CD4-positive, alpha-beta memory T cell (primary cell): ENCODE measurements at regions of chr3 and their contacts with region 1.

Region 1: GRCh38 chr3:57692259-57693147 is at the start of gene DENND6A:
- DNase-seq: peak; percentile 87 to 96 (median 95)
- H3K4me3 ChIP-seq: peak within 1 kb of the TSS; percentile 15 to 95
- H3K4me3 Mint-ChIP-seq: peak within 1 kb of the TSS; percentile 82 to 97 (median 92)
- H3K27ac ChIP-seq: peak within 1 kb of the TSS; percentile 84
- H3K27ac Mint-ChIP-seq: peak within 1 kb of the TSS; percentile 79 to 97 (median 94)
- H3K4me1 ChIP-seq: peaks cover 49% of the 10 kb centered on the region
- H3K4me1 Mint-ChIP-seq: peaks cover 16 to 45% (median 32%) of the 10 kb centered on the region in 4 donors
- H3K27me3 ChIP-seq: no peaks in the 10 kb centered on the region
- H3K27me3 Mint-ChIP-seq: no peaks in the 10 kb centered on the region
- total RNA-seq, gene DENND6A: 40.1 to 43.7 TPM

Region 2: DNA sequence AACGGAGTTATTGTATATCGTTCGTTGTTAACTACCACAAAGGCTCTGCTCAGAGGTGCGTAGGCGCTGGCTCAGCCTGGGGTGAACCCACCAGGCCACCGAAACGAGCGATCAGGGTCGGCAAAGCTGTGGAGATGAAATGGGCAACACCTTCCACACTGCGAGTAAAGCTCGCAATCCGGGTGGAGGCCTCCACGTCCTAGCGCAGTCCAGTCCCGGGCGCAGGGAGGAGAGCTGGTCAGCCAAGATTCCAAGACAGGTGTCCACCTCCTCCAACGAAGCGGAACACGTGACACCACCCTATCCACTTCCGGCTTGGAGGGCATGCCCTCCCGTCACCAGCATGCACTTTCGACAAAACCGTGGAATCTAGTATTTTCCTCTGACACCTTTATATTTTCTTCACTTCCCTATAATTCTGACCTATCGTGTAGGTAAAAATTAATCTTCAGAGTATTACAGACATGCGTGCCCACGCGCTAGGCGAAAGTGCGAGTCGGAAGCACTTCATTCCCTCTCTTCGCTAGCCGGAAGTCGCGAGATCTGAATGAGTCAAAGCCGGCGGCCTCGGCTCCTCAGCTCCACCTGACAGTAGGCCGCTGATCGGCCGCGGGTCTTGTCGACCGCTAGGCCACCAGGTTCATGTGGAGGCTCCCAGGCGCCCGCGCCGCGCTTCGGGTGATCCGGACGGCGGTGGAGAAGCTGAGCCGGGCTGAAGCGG is 136.6 kb before region 1 on chr3 and contains the start of gene PDE12:
- CTCF ChIA-PET with region 1: no interaction called
- POLR2A ChIA-PET with region 1: interaction called, 27 read pairs
- intact Hi-C with region 1: loop called (anchors 2 kb)
- DNase-seq: peak; percentile 82 to 87 (median 83)
- H3K4me3 ChIP-seq: peak within 1 kb of the TSS; percentile 85 to 89
- H3K4me3 Mint-ChIP-seq: peak within 1 kb of the TSS; percentile 92 to 100 (median 96)
- H3K27ac ChIP-seq: peak within 1 kb of the TSS; percentile 89
- H3K27ac Mint-ChIP-seq: peak within 1 kb of the TSS; percentile 97 to 100 (median 99)
- H3K4me1 ChIP-seq: peaks cover 43% of the 10 kb centered on the region
- H3K4me1 Mint-ChIP-seq: peaks cover 24 to 57% (median 36%) of the 10 kb centered on the region in 4 donors
- H3K27me3 ChIP-seq: no peaks in the 10 kb centered on the region
- H3K27me3 Mint-ChIP-seq: no peaks in the 10 kb centered on the region
- total RNA-seq, gene PDE12: 23.8 to 24.9 TPM

Region 3: DNA sequence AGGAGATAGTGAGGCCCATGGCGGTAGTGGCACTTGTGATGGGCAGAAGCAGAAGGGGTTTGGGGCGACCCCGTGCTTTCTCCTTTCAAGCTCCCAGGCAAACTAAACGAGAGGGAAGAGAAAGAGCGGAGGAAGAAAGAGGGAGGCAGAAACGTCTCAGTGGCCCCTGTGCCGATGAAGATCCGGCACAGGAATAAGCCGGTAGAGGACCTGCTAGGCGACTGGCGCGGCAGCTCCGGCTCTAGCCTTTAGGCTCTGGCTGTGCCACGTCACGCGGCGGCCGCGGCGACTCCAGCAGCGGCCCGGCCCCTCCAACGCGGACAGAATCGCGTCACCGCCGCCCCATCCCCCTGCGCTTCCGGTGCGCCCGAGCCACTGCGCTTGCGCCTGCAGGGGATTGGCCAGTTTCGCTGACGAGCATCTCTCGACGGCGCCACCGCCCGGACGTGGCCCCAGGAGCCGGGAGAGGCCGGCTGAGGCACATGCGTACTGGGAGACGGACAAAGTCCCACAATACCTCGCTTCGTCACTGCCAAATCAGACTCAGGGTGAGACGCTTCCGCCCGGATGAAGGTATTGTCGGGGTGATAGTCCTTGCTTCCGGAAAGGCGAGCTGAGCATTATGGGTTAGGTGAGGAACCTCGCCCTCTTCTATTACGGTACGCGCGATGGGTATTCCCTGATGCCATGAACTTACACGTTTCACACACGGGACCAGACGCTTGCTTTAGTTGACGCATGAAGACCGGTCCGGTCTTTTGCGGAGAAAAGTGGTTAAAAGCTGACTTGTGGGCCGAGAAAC is 95.2 kb before region 1 on chr3 and contains the start of gene ARF4:
- CTCF ChIA-PET with region 1: no interaction called
- POLR2A ChIA-PET with region 1: interaction called, 40 read pairs
- intact Hi-C with region 1: loop called (anchors 1 kb)
- DNase-seq: peak; percentile 100
- H3K4me3 ChIP-seq: peak within 1 kb of the TSS; percentile 72 to 95
- H3K4me3 Mint-ChIP-seq: peak within 1 kb of the TSS; percentile 85 to 99 (median 99)
- H3K27ac ChIP-seq: peak within 1 kb of the TSS; percentile 100
- H3K27ac Mint-ChIP-seq: peak within 1 kb of the TSS; percentile 99 to 100 (median 100)
- H3K4me1 ChIP-seq: peaks cover 62% of the 10 kb centered on the region
- H3K4me1 Mint-ChIP-seq: peaks cover 34 to 72% (median 48%) of the 10 kb centered on the region in 4 donors
- H3K27me3 ChIP-seq: no peaks in the 10 kb centered on the region
- H3K27me3 Mint-ChIP-seq: no peaks in the 10 kb centered on the region
- total RNA-seq, gene ARF4: 55.8 to 58.5 TPM

Region 4: DNA sequence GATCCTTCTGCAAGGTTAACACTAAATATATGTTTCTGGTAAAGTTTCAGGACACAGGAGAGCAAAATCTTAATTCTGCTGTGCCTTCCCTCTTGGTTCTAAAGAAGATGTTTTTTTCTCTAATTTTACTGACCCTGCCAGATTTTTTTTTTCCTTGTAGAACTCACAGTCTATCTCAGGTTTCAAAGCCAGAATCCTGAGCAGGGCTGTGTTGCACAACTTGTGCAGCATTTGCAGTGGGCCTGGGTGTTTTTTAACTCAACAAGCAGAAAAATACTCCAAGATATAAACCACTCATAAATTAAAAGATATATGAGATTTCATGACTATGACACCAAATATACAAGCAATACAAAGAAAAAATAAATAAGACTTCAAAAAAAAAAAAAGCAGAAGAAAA is 55.1 kb before region 1 on chr3:
- CTCF ChIA-PET with region 1: no interaction called
- POLR2A ChIA-PET with region 1: no interaction called
- intact Hi-C with region 1: loop called (anchors 10 kb)
- DNase-seq: no peak
- H3K4me3 ChIP-seq: no peak overlapping the region
- H3K4me3 Mint-ChIP-seq: no peak overlapping the region
- H3K27ac ChIP-seq: no peak overlapping the region
- H3K27ac Mint-ChIP-seq: no peak overlapping the region
- H3K4me1 ChIP-seq: no peaks in the 10 kb centered on the region
- H3K4me1 Mint-ChIP-seq: peaks cover 0 to 8% (median under 1%) of the 10 kb centered on the region in 4 donors
- H3K27me3 ChIP-seq: no peaks in the 10 kb centered on the region
- H3K27me3 Mint-ChIP-seq: no peaks in the 10 kb centered on the region

Region 5: DNA sequence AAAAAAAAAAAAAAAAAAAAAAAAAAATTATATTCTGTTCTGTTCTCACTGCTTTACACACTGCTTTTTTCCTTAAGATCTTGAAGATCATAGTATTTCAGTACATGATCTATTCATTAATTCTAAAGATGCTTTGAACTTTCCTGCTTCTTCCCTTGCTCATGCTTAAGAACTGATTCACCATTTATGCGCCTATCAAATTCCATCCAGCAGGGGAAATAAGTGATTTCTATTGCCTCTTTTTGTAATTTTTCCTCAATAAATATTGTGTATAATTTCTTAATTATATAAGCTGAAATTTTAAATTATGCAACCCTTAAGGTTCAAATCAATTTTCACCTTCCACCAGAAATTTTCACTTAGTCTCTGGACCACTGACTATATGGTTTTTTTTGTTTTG is 10.2 kb before region 1 on chr3:
- CTCF ChIA-PET with region 1: no interaction called
- POLR2A ChIA-PET with region 1: interaction called, 12 read pairs
- intact Hi-C with region 1: loop called (anchors 2 kb)
- DNase-seq: no peak
- H3K4me3 ChIP-seq: no peak overlapping the region
- H3K4me3 Mint-ChIP-seq: peak overlapping the region in 5 of 8 donors; percentile 6 to 68 (median 39)
- H3K27ac ChIP-seq: no peak overlapping the region
- H3K27ac Mint-ChIP-seq: no peak overlapping the region
- H3K4me1 ChIP-seq: peaks cover 78% of the 10 kb centered on the region
- H3K4me1 Mint-ChIP-seq: peaks cover 47 to 80% (median 71%) of the 10 kb centered on the region in 4 donors
- H3K27me3 ChIP-seq: no peaks in the 10 kb centered on the region
- H3K27me3 Mint-ChIP-seq: no peaks in the 10 kb centered on the region